Pancreas (tissue), 10 donors: ENCODE measurements at regions of chr3 and their contacts with region 1.

Region 1: GRCh38 chr3:111717601-111718000 is 122.5 kb upstream of the ZBED2 start:
- DNase-seq: peak; percentile 55 to 80 (median 61)
- ATAC-seq: peak; percentile 94 to 99 (median 98)
- H3K4me3 ChIP-seq: no peak overlapping the region
- H3K27ac ChIP-seq: no peak overlapping the region
- H3K4me1 ChIP-seq: no peaks in the 10 kb centered on the region
- H3K27me3 ChIP-seq: no peaks in the 10 kb centered on the region
- CTCF ChIP-seq: peak; percentile 89 to 93 (median 92)

Region 2: GRCh38 chr3:110789315-110789714 is 928.3 kb before region 1 on chr3:
- intact Hi-C with region 1: no loop called
- DNase-seq: no peak
- ATAC-seq: no peak
- H3K4me3 ChIP-seq: no peak overlapping the region
- H3K27ac ChIP-seq: no peak overlapping the region
- H3K4me1 ChIP-seq: no peaks in the 10 kb centered on the region
- H3K27me3 ChIP-seq: no peaks in the 10 kb centered on the region
- CTCF ChIP-seq: no peak

Region 3: GRCh38 chr3:111636366-111636885 is 81.2 kb before region 1 on chr3:
- intact Hi-C with region 1: no loop called
- DNase-seq: no peak
- ATAC-seq: peak in 1 of 4 donors; percentile 34
- H3K4me3 ChIP-seq: no peak overlapping the region
- H3K27ac ChIP-seq: no peak overlapping the region
- H3K4me1 ChIP-seq: no peaks in the 10 kb centered on the region
- H3K27me3 ChIP-seq: no peaks in the 10 kb centered on the region
- CTCF ChIP-seq: no peak

Region 4: DNA sequence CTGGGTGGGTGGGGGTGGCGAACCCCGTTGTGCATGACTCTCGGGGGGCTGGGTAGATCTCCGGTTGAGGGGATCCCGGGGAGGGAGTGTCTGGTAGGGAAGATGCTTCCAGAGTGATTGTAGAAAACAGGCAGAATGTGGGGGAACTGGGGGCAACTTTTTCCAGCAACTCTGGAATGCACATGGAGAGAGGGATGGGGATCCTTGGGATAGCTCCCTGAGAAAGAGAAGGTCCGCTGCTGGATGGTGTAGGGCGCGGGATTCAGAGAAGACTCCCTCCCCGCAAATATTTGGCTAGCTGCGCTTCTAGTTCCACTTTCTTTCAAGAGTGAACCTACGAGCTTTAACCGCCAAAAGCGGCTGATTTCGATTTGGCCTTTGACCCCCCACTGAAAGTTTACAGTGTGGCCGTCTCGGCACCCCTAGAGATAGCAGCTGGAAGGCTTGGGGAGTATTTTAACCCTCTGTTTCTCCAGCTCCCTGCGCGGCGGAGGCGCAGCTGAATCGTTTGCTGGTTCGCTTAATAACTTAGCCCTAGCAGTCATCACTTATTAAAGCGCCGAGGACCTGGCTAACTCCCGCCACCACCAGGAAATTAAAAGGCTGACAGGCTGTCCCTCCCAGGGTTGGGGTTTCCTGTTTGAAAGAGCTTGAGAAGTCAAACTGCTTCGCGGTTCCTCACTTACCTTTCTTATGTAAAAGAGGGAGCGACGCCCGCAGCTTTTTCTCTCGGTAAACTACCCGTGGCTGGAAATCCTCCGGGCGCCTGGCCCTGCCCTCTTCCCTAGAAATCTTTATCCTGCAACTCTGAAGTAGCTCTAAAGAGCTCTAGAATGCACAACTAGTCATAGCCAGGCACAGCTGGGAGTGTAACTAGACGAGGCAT is 142.6 kb after region 1 on chr3:
- intact Hi-C with region 1: loop called in 2 of 3 experiments (anchors 5 to 10 kb)
- DNase-seq: peak; percentile 54 to 80 (median 67)
- ATAC-seq: peak; percentile 83 to 91 (median 86)
- H3K4me3 ChIP-seq: peak overlapping the region; percentile 56 to 69 (median 60)
- H3K27ac ChIP-seq: peak overlapping the region; percentile 54 to 87 (median 80)
- H3K4me1 ChIP-seq: peaks cover 14 to 27% (median 17%) of the 10 kb centered on the region in 3 donors
- H3K27me3 ChIP-seq: no peaks in the 10 kb centered on the region
- CTCF ChIP-seq: peak; percentile 9 to 41 (median 37)

Region 5: GRCh38 chr3:112032098-112032731 is 314.6 kb after region 1 on chr3:
- intact Hi-C with region 1: no loop called
- DNase-seq: no peak
- ATAC-seq: peak in 1 of 4 donors; percentile 46
- H3K4me3 ChIP-seq: no peak overlapping the region
- H3K27ac ChIP-seq: no peak overlapping the region
- H3K4me1 ChIP-seq: no peaks in the 10 kb centered on the region
- H3K27me3 ChIP-seq: no peaks in the 10 kb centered on the region
- CTCF ChIP-seq: no peak